PC-9 (cell line): ENCODE measurements at regions of chr5 and their contacts with region 1.

Region 1: DNA sequence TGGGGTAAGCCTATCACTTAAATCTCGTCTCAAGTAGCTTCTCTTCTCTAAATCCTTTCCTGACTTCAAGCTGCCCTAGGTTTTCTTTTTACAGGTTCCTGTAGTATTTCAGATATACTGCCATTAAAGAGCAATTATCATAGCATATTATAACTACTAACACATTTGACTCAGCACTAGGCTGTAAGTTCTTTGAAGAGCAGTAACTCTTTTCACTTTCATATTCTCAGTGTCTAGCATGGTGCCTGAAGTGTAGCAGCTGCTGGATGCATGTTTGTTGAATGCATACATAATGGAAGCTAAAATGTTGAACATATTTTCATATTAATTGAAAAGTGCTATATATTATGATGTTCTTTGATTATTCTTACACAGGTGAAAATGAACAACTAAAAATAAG is 22.5 kb downstream of the CCDC152 start:
- DNase-seq: no peak
- H3K4me3 ChIP-seq: no peak overlapping the region
- H3K27ac ChIP-seq: no peak overlapping the region
- H3K4me1 ChIP-seq: no peaks in the 10 kb centered on the region
- H3K27me3 ChIP-seq: peaks cover 7% of the 10 kb centered on the region; the same call in 1 of the 2 replicates
- CTCF ChIP-seq: no peak

Region 2: GRCh38 chr5:42767491-42768105 is 11.5 kb before region 1 on chr5:
- CTCF ChIA-PET with region 1: no interaction called
- POLR2A ChIA-PET with region 1: interaction called, 10 read pairs
- intact Hi-C with region 1: no loop called
- DNase-seq: no peak
- H3K4me3 ChIP-seq: no peak overlapping the region
- H3K27ac ChIP-seq: no peak overlapping the region
- H3K4me1 ChIP-seq: peaks cover 1% of the 10 kb centered on the region; the same call in 1 of the 2 replicates
- H3K27me3 ChIP-seq: no peaks in the 10 kb centered on the region
- CTCF ChIP-seq: peak; percentile 86